Left lung (tissue), 14 donors: ENCODE measurements at regions of chr16 and their contacts with region 1.

Region 1: GRCh38 chr16:85821441-85822135 is 22.1 kb downstream of the COX4I1 start:
- DNase-seq: peak; percentile 64 to 94 (median 85)
- ATAC-seq: peak; percentile 97
- H3K4me3 ChIP-seq: no peak overlapping the region
- H3K27ac ChIP-seq: no peak overlapping the region
- H3K4me1 ChIP-seq: peaks cover 4 to 11% of the 10 kb centered on the region in 2 donors
- H3K27me3 ChIP-seq: peaks cover 0 to 6% of the 10 kb centered on the region in 2 donors
- CTCF ChIP-seq: peak; percentile 94 to 97

Region 2: DNA sequence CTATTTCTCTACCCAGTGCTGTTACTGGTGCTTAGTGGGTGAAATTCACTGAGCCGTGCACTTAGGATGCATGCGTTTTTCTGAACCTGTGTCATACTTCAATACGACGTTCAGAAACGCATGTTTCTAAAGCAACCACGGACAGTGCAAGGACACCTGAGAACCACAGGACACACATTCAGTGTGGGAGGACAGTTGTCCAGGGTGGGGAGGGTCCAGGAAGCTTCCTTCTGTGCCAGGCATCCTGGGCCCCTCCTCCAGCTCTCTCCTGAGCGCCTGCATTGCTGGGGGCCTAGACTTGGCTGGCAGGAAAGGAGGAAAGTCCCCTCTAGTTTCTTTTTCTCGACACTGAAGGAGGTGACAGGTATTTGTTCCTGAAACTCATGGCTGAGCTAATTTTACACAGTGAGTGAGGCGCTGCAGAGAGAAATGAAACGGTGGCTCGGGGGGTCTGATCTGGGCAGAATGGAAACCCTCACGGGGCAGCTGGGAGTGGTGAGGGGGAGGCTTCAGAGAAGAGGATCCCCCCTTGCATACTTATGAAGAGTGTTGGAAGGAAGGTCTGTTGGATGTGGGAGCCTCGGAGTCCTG is 167.2 kb after region 1 on chr16:
- intact Hi-C with region 1: loop called in 1 of 2 experiments (anchors 2 kb)
- DNase-seq: no peak
- ATAC-seq: no peak
- H3K4me3 ChIP-seq: no peak overlapping the region
- H3K27ac ChIP-seq: no peak overlapping the region
- H3K4me1 ChIP-seq: peaks cover 0 to 29% of the 10 kb centered on the region in 2 donors
- H3K27me3 ChIP-seq: peaks cover 0 to 17% of the 10 kb centered on the region in 2 donors
- CTCF ChIP-seq: no peak

Region 3: DNA sequence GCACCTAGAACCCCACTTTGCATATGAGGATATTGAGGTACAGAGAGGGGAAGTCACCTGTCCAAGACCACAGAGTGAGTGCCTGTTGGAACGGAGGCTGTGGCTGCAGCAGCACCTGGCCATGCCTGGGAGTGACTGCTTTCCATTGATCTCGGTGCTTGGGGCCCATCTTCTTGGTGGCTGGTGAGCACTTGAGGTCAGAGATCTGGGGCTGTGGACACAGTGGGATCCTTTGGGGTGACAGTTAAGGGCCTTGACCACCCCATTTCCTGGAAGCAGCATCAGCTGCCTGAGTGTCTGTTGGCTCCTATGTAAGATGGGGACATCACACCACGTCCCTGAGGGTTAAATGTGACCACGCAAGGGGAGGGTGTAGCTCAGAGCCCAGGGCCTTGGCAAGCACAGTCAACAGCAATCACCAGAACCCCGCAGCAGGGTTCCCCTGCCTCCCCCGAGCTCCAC is 189.1 kb after region 1 on chr16:
- intact Hi-C with region 1: loop called (anchors 5 kb)
- DNase-seq: no peak
- ATAC-seq: no peak
- H3K4me3 ChIP-seq: no peak overlapping the region
- H3K27ac ChIP-seq: no peak overlapping the region
- H3K4me1 ChIP-seq: no peaks in the 10 kb centered on the region
- H3K27me3 ChIP-seq: peaks cover 0 to 6% of the 10 kb centered on the region in 2 donors
- CTCF ChIP-seq: no peak

Region 4: GRCh38 chr16:86016201-86016871 is 194.7 kb after region 1 on chr16:
- intact Hi-C with region 1: loop called (anchors 5 kb)
- DNase-seq: peak in 3 of 4 donors; percentile 33 to 76 (median 46)
- ATAC-seq: peak; percentile 68
- H3K4me3 ChIP-seq: no peak overlapping the region
- H3K27ac ChIP-seq: no peak overlapping the region
- H3K4me1 ChIP-seq: peaks cover 5% of the 10 kb centered on the region in 2 donors
- H3K27me3 ChIP-seq: peaks cover 0 to 24% of the 10 kb centered on the region in 2 donors
- CTCF ChIP-seq: peak; percentile 60 to 64